Posterior cingulate gyrus (tissue), 11 donors: ENCODE measurements at regions of chr17 and their contacts with region 1.

Region 1: GRCh38 chr17:33750943-33751701 is 458.0 kb upstream of the ASIC2 start:
- DNase-seq: peak; percentile 50 to 94 (median 80)

Region 2: GRCh38 chr17:33335491-33336173 is 415.5 kb before region 1 on chr17:
- intact Hi-C with region 1: no loop called
- DNase-seq: no peak

Region 3: GRCh38 chr17:33520426-33521330 is 230.4 kb before region 1 on chr17:
- intact Hi-C with region 1: loop called (anchors 2 kb)
- DNase-seq: peak; percentile 21 to 89 (median 60)

Region 4: DNA sequence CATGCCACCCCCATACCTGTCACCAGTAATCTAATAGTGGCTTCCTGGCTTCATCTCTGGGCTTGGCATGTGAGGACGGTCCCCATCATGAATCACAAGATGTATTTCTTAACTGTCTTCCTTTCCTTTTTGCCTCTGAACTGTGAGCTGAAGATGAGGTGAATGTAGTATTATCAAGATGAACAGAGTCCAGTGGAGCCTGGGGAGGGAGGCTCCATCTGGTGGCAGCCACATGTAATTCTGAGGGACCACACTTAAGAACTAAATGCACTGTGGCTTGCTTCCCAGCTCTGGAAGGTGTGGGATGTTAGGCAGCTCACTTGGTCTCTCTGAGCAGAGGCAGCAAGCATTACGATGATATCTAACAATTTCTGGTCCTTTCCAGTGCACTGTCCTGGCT is 103.2 kb before region 1 on chr17:
- intact Hi-C with region 1: no loop called
- DNase-seq: peak; percentile 18 to 94 (median 59)

Region 5: GRCh38 chr17:33725675-33726271 is 25.3 kb before region 1 on chr17:
- intact Hi-C with region 1: loop called (anchors 1 kb)
- DNase-seq: peak in 8 of 10 donors; percentile 23 to 82 (median 36)

Region 6: GRCh38 chr17:33832262-33832661 is 81.1 kb after region 1 on chr17:
- intact Hi-C with region 1: no loop called
- DNase-seq: no peak

Region 7: DNA sequence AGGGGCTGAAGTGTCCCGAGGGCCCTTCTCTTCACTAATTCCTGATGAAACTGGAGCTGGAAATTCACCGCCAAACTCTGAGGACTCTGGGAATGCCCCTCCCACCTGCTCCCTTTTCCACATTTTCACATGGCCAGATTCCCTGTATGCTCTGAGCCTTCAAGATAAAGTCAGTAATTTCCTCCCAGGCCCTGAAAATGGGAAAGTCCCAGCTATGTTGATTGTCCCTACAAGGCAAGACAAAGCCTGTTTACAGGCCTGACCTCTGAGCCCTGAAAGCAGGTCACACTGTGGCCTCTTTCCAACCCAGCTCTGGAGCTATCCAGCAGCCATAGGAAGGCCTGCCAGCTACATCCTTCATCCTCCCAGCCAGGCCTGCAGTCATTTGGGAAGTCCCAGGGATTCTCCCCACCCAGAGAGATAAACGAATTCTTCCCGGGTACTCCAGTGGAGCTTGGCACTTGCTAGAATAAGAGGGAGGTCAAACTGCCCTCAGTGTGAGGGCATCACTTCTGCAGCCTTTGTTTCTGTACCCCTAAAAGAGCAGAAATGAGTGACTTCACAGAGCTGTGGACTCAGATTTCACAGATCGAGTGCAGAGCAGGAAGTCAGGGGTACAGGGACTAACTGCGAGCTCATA is 484.4 kb after region 1 on chr17:
- intact Hi-C with region 1: no loop called
- DNase-seq: no peak